ENCODE measurements at regions of chr1 and their contacts with region 1.

Region 1: GRCh38 chr1:160830321-160831153 is 32.1 kb downstream of the CD244 start:
- DNase-seq: peak; percentile 53
- ATAC-seq: peak; percentile 97
- H3K4me3 ChIP-seq: no peak overlapping the region
- H3K27ac ChIP-seq: no peak overlapping the region
- H3K4me1 ChIP-seq: 0 out of 4 replicates have a peak, but pooled peaks cover 0 to 3% of the 10 kb centered on the region in 2 experiments
- H3K27me3 ChIP-seq: peaks cover 5% of the 10 kb centered on the region; the same call in 1 of the 2 replicates
- CTCF ChIP-seq: peak; percentile 78 to 91 (median 87)
- POLR2A ChIP-seq: no peak
- RAD21 ChIP-seq: peak; percentile 70

Region 2: DNA sequence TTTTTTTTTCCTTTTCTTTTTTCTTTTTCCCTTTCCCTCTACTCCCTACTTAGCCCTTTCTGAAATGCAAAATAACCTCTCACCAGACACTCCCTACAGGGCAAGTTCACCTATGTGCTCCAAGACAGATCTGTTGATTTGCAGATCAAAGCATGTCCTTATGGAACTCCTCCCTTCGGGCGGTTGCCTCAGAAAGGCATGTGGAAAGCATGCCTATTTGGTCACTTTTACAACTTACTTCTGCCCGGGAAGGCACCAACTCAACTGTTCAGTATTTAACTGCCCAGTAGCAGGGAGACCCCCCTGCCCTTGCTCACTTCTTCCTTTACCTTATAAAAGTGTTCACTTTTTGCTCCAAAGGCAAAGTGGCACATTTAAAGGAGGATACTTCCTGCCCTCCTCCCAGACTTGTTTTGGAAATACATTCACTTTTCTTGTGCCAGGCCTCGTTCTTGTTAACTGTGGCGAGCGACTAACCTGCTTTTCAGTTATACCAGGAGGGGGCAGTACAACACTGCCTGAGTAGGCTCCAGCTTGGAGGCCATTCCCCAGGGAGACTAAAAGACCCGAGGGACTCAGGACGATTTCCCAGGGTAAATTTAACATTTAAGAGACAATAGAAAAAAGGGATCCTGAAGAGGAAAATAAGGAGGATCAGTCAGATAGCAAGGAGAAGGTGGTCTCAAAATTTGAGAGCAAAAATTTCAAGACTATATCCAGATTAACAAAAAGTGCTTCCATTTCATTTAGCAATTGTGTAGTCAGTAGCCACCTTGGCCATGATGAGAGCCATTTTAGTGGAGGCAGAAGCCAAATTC is 103.8 kb before region 1 on chr1:
- CTCF ChIA-PET with region 1: interaction called, 16 read pairs
- POLR2A ChIA-PET with region 1: no interaction called
- RAD21 ChIA-PET with region 1: interaction called in 1 of 2 experiments, 3 read pairs
- intact Hi-C with region 1: loop called (anchors 1 kb)
- DNase-seq: peak; percentile 75
- ATAC-seq: peak; percentile 95
- H3K4me3 ChIP-seq: no peak overlapping the region
- H3K27ac ChIP-seq: 0 out of 2 replicates have a peak overlapping the region, but pooled peaks have one; percentile 11
- H3K4me1 ChIP-seq: peaks cover 6 to 14% of the 10 kb centered on the region in 2 experiments; a peak in 3 of 4 replicates
- H3K27me3 ChIP-seq: no peaks in the 10 kb centered on the region
- CTCF ChIP-seq: peak; percentile 88 to 95 (median 94)
- POLR2A ChIP-seq: no peak
- RAD21 ChIP-seq: peak; percentile 93